ENCODE measurements at regions of chr6 and their contacts with region 1.

Region 1: GRCh38 chr6:13853871-13854270 is 39.5 kb upstream of the MCUR1 start:
- DNase-seq: no peak
- H3K4me3 ChIP-seq: no peak overlapping the region
- H3K27me3 ChIP-seq: no peaks in the 10 kb centered on the region
- CTCF ChIP-seq: no peak

Region 2: DNA sequence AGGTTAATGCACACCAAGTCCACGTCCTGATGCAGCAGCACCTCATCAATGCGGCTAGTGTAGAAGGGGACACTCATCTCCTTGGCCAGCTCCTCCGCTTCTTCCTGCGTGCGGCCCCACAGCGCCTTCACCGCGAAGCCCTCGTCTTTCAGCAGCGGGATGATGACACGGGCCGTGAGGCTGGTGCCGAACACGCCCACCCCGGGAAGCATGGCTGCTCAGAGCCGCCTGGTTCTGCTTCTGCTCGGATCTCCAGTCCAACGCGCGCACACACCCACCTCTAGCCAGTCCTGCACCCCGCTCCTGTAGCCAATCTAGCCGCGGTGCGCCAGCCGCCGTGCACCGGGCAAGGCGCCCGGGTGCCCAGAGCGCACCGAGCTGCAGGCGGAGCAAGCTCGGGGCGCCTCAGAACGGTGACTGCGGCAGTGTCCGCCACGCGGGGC is 367.2 kb before region 1 on chr6:
- CTCF ChIA-PET with region 1: no interaction called
- POLR2A ChIA-PET with region 1: interaction called, 16 read pairs
- DNase-seq: no peak
- H3K4me3 ChIP-seq: peak overlapping the region; percentile 57
- H3K27me3 ChIP-seq: no peaks in the 10 kb centered on the region
- CTCF ChIP-seq: no peak; the same call in 1 of the 2 replicates

Measured in BJ (cell line).